GM12878 (cell line): ENCODE measurements at regions of chr16 and their contacts with region 1.

Region 1: GRCh38 chr16:16127469-16128116 is 95.7 kb downstream of the ABCC6 start:
- DNase-seq: peak; percentile 17
- ATAC-seq: peak; percentile 94
- H3K4me3 ChIP-seq: no peak overlapping the region
- H3K27ac ChIP-seq: no peak overlapping the region
- H3K4me1 ChIP-seq: no peaks in the 10 kb centered on the region
- H3K27me3 ChIP-seq: no peaks in the 10 kb centered on the region
- CTCF ChIP-seq: peak; percentile 77 to 86 (median 79)
- EP300 ChIP-seq: no peak
- POLR2A ChIP-seq: no peak
- RAD21 ChIP-seq: peak; percentile 87

Region 2: DNA sequence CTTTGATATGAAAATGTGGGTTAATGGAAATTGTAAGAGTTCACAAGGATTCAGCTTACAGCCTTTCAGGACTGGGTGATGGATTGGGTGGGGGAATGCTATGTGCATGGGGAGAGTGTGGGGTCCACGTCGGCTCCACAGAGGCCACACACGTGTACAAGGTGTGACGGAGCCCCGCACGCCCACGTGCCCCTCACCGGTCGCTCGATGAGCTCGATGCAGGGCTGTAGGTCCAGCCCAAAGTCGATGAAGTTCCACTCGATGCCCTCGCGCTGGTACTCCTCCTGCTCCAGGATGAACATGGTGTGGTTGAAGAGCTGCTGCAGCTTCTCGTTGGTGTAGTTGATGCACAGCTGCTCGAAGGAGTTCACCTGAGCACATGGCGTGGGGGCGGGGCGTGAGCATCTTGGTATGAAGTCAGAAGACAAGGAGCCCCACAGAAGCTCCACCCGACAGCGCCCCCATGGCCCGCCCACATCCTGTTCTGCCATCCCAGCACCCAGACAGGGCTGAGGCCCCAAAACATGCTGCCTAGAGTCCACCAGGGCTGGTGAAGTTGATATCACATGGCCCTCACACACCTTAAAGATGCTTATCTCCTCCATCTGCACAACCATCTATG is 369.9 kb before region 1 on chr16:
- CTCF ChIA-PET with region 1: interaction called, 5 read pairs
- POLR2A ChIA-PET with region 1: no interaction called
- RAD21 ChIA-PET with region 1: interaction called, 4 read pairs
- SMC1A ChIA-PET with region 1: no interaction called
- in situ Hi-C with region 1: loop called (anchors 5 kb)
- intact Hi-C with region 1: loop called (anchors 10 kb)
- DNase-seq: no peak
- ATAC-seq: no peak
- H3K4me3 ChIP-seq: no peak overlapping the region
- H3K27ac ChIP-seq: no peak overlapping the region
- H3K4me1 ChIP-seq: no peaks in the 10 kb centered on the region
- H3K27me3 ChIP-seq: no peaks in the 10 kb centered on the region
- CTCF ChIP-seq: no peak
- EP300 ChIP-seq: no peak
- POLR2A ChIP-seq: no peak
- RAD21 ChIP-seq: no peak

Region 3: DNA sequence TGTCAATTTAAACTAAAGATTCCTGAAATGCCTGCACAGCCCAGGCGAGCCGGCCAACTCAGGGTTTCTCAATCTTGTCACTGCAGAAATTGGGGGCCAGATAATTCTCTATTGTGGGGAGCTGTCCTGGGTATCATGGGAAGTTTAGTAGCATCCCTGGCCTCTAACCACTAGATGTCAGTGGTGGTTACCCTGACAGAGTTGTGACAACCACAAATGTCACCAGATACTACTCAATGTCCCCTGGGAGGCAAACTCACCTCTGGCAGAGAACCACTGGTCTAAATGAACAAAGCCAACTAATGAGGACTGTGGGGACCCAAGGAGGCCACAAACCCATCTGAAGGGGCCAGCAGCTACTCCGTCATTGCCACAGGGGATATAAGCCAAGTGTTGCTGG is 361.7 kb before region 1 on chr16:
- CTCF ChIA-PET with region 1: interaction called, 11 read pairs
- POLR2A ChIA-PET with region 1: no interaction called
- RAD21 ChIA-PET with region 1: interaction called, 9 read pairs
- SMC1A ChIA-PET with region 1: interaction called, 4 read pairs
- in situ Hi-C with region 1: no loop called
- intact Hi-C with region 1: loop called (anchors 10 kb)
- DNase-seq: peak; percentile 74
- ATAC-seq: peak; percentile 99
- H3K4me3 ChIP-seq: no peak overlapping the region
- H3K27ac ChIP-seq: no peak overlapping the region
- H3K4me1 ChIP-seq: no peaks in the 10 kb centered on the region; the same call in 1 of the 2 replicates
- H3K27me3 ChIP-seq: no peaks in the 10 kb centered on the region
- CTCF ChIP-seq: peak; percentile 80 to 93 (median 81)
- EP300 ChIP-seq: no peak
- POLR2A ChIP-seq: no peak
- RAD21 ChIP-seq: peak; percentile 88

Region 4: DNA sequence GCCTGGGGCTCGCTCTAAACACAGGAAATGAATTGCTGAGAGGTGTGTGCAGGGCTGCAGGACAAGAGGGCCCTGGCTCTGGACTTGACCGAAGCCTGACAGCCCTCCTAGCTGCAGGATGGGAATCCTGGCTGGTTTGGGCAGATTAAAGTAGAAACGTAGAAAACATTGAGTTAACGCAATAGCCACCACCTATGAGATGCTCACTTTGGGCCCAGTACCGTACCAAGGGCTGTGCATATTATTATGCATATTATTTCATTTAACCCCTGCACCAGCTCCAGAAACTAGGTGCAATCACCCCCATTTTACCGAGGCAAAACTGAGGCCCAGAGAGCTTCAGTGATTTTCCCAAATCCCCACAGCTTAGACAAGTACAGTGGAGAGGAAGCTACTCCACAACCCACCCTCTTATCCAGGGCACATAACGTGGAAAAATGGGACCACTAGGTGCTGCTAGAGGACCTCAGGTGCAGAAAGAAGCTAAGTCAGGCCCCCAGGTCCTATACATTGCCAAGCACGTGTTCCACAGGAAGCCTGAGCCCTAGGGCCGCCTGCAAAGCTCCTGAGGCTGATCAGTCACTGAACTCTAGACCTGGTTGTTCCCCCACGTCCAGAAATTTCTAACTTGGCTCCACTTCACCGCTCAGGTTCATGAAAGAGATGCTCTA is 349.9 kb before region 1 on chr16:
- CTCF ChIA-PET with region 1: interaction called, 13 read pairs
- POLR2A ChIA-PET with region 1: no interaction called
- RAD21 ChIA-PET with region 1: interaction called, 3 read pairs
- SMC1A ChIA-PET with region 1: interaction called, 4 read pairs
- in situ Hi-C with region 1: no loop called
- intact Hi-C with region 1: no loop called
- DNase-seq: no peak
- ATAC-seq: peak; percentile 65
- H3K4me3 ChIP-seq: no peak overlapping the region
- H3K27ac ChIP-seq: no peak overlapping the region
- H3K4me1 ChIP-seq: no peaks in the 10 kb centered on the region
- H3K27me3 ChIP-seq: no peaks in the 10 kb centered on the region; a peak in 1 of 4 replicates
- CTCF ChIP-seq: peak; percentile 40 to 60 (median 54)
- EP300 ChIP-seq: no peak
- POLR2A ChIP-seq: no peak
- RAD21 ChIP-seq: peak; percentile 70

Region 5: DNA sequence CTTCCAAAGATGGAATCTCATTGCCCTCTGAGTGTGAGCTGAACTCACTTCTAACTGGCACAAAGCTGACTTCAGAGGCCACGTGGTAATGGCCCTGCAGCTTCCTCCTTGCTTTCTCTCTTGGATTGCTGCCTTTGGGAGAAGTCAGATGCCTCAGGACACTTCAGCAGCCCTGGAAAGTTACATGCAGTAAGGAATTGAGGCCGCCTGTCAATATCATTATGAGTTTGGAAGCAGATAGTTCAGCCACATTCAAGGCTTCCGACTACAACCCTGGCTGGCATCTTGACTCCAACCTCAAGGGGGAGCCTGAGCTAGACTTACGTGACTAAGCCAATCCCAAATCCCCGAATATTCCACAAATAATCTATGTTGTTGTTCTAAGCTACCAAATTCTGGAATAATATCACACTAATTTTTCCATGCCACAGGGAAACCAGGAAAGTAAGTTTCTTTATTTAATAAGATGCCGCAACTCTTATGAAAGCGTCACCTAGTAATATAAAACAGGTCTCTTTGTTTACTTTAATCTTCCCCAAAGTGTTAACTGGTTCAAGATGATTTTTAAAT is 252.8 kb before region 1 on chr16:
- CTCF ChIA-PET with region 1: interaction called, 35 read pairs
- POLR2A ChIA-PET with region 1: no interaction called
- RAD21 ChIA-PET with region 1: interaction called, 3 read pairs
- SMC1A ChIA-PET with region 1: interaction called, 4 read pairs
- in situ Hi-C with region 1: no loop called
- intact Hi-C with region 1: no loop called
- DNase-seq: no peak
- ATAC-seq: peak; percentile 65
- H3K4me3 ChIP-seq: no peak overlapping the region
- H3K27ac ChIP-seq: no peak overlapping the region
- H3K4me1 ChIP-seq: peaks cover 3% of the 10 kb centered on the region; the same call in 1 of the 2 replicates
- H3K27me3 ChIP-seq: no peaks in the 10 kb centered on the region
- CTCF ChIP-seq: peak; percentile 54 to 73 (median 61)
- EP300 ChIP-seq: no peak
- POLR2A ChIP-seq: no peak
- RAD21 ChIP-seq: peak; percentile 56

Region 6: GRCh38 chr16:16062023-16062932 is 65.3 kb before region 1 on chr16:
- CTCF ChIA-PET with region 1: no interaction called
- POLR2A ChIA-PET with region 1: no interaction called
- RAD21 ChIA-PET with region 1: no interaction called
- SMC1A ChIA-PET with region 1: no interaction called
- in situ Hi-C with region 1: loop called (anchors 10 kb)
- intact Hi-C with region 1: no loop called
- DNase-seq: no peak
- ATAC-seq: no peak
- H3K4me3 ChIP-seq: no peak overlapping the region
- H3K27ac ChIP-seq: no peak overlapping the region
- H3K4me1 ChIP-seq: peaks cover 3% of the 10 kb centered on the region; the same call in 1 of the 2 replicates
- H3K27me3 ChIP-seq: no peaks in the 10 kb centered on the region
- CTCF ChIP-seq: no peak
- EP300 ChIP-seq: no peak
- POLR2A ChIP-seq: no peak
- RAD21 ChIP-seq: no peak

Region 7: DNA sequence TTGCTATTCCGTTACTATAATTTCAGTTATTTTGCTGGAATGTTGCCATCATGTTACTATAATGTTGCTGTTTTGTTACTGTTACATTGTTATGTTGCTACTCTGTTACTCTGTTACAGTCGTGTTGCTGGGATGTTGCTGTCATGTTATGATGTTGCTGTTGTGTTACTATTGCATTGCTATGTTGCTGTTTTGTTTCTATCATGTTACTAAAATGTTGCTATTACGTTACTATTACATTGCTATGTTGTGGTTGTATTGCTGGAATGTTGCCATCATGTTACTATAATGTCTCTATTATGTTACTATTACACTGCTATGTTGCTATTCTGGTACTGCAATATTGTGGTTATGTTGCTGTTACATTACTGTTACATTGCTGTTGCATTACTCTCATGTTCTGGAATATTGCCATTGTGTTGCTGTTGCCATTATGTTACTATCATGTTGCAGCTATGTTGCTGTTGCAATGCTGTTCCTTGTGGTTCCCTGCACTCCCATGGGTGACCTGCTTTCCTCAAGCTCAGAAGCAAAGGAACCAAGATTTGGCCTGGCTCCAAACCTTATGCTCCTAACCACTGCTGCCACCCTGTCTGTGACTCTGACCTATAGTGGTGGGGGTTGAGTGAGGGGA is 31.3 kb after region 1 on chr16:
- CTCF ChIA-PET with region 1: no interaction called
- POLR2A ChIA-PET with region 1: no interaction called
- RAD21 ChIA-PET with region 1: no interaction called
- SMC1A ChIA-PET with region 1: no interaction called
- in situ Hi-C with region 1: no loop called
- intact Hi-C with region 1: no loop called
- DNase-seq: no peak
- ATAC-seq: no peak
- H3K4me3 ChIP-seq: no peak overlapping the region
- H3K27ac ChIP-seq: no peak overlapping the region
- H3K4me1 ChIP-seq: no peaks in the 10 kb centered on the region
- H3K27me3 ChIP-seq: no peaks in the 10 kb centered on the region
- CTCF ChIP-seq: no peak
- EP300 ChIP-seq: no peak
- POLR2A ChIP-seq: no peak
- RAD21 ChIP-seq: no peak

Region 8: GRCh38 chr16:16578701-16579100 is 451.1 kb after region 1 on chr16:
- CTCF ChIA-PET with region 1: no interaction called
- POLR2A ChIA-PET with region 1: no interaction called
- RAD21 ChIA-PET with region 1: no interaction called
- SMC1A ChIA-PET with region 1: no interaction called
- in situ Hi-C with region 1: no loop called
- intact Hi-C with region 1: no loop called
- DNase-seq: no peak
- ATAC-seq: no peak
- H3K4me3 ChIP-seq: no peak overlapping the region
- H3K27ac ChIP-seq: no peak overlapping the region
- H3K4me1 ChIP-seq: no peaks in the 10 kb centered on the region
- H3K27me3 ChIP-seq: no peaks in the 10 kb centered on the region
- CTCF ChIP-seq: no peak
- EP300 ChIP-seq: no peak
- POLR2A ChIP-seq: no peak
- RAD21 ChIP-seq: no peak